MCF 10A (cell line): ENCODE measurements at regions of chr7 and their contacts with region 1.

Region 1: DNA sequence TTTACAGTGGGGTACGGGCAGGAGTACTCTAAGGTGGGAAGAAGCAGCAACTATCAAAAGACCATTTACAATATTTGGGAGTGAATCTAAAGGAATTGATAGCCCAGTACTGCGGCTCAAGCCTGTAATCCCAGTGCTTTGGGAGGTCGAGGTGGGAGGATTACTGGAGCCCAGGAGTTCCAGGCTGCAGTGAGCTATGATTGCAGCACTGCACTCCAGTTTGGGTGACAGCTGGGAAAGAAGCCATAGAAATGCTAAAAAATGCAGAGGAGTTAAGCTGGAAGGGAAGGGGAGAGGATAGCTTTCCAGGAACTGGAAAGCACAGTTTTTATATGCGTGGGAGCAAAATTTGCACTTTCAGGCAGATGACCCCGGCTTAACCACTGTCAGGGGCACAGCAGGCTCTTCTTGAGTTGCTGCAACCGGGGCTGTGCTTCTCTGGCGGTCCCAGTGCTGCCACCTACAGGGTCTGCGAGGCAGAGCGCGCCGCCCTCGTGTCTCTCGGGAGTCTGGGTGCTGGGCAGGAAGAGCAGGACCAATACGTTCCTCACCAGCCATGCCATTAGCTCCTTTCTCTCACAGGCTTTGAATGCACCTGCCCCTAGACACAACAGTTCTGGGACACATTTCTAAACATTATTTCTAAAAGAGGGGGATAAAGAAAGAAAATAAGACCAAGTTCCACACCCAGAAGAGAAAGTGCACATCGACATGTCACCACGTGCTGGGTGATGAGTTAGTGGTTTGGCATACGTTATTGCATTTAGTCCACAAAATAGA is 10.1 kb upstream of the BMPER start:
- DNase-seq: peak; percentile 77
- H3K4me3 Mint-ChIP-seq: no peak overlapping the region
- H3K27ac Mint-ChIP-seq: no peak overlapping the region
- H3K4me1 Mint-ChIP-seq: peaks cover 14% of the 10 kb centered on the region
- H3K27me3 Mint-ChIP-seq: peaks cover 11% of the 10 kb centered on the region
- CTCF ChIP-seq: peak; percentile 79

Region 2: GRCh38 chr7:33716581-33717477 is 178.4 kb before region 1 on chr7:
- CTCF ChIA-PET with region 1: interaction called, 13 read pairs
- POLR2A ChIA-PET with region 1: no interaction called
- intact Hi-C with region 1: no loop called
- DNase-seq: peak; percentile 63
- H3K4me3 Mint-ChIP-seq: no peak overlapping the region
- H3K27ac Mint-ChIP-seq: no peak overlapping the region
- H3K4me1 Mint-ChIP-seq: peaks cover 5% of the 10 kb centered on the region
- H3K27me3 Mint-ChIP-seq: peaks cover 15% of the 10 kb centered on the region
- CTCF ChIP-seq: peak; percentile 81

Region 3: DNA sequence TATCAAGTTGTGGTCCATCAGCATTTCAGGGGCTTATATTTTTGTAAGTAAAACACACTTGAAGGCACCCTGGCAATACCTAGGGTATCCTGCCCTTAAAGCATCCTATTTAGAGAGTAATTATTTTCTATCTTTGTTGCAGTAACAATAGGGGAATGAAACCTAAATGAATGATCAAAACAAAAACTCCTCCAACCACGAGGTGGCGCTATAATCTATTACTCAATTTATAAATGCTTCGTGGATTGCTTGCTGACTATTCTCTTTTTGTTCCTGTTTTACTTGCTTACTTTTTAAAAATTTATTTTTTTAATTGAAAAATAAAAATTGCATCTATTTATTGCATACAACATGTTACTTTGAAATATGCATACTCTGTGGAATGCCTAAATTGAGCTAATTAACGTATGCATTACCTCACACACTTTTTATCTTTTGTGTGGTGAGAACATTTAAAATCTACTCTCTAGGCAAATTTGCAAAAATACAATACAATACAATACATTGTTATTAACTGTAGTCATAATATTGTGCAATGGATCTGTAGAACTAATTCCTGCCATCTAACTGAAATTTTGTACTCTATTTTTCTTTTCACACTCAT is 137.6 kb before region 1 on chr7:
- CTCF ChIA-PET with region 1: interaction called, 90 read pairs
- POLR2A ChIA-PET with region 1: no interaction called
- intact Hi-C with region 1: loop called (anchors 2 kb)
- DNase-seq: peak; percentile 61
- H3K4me3 Mint-ChIP-seq: no peak overlapping the region
- H3K27ac Mint-ChIP-seq: no peak overlapping the region
- H3K4me1 Mint-ChIP-seq: no peaks in the 10 kb centered on the region
- H3K27me3 Mint-ChIP-seq: no peaks in the 10 kb centered on the region
- CTCF ChIP-seq: peak; percentile 55

Region 4: DNA sequence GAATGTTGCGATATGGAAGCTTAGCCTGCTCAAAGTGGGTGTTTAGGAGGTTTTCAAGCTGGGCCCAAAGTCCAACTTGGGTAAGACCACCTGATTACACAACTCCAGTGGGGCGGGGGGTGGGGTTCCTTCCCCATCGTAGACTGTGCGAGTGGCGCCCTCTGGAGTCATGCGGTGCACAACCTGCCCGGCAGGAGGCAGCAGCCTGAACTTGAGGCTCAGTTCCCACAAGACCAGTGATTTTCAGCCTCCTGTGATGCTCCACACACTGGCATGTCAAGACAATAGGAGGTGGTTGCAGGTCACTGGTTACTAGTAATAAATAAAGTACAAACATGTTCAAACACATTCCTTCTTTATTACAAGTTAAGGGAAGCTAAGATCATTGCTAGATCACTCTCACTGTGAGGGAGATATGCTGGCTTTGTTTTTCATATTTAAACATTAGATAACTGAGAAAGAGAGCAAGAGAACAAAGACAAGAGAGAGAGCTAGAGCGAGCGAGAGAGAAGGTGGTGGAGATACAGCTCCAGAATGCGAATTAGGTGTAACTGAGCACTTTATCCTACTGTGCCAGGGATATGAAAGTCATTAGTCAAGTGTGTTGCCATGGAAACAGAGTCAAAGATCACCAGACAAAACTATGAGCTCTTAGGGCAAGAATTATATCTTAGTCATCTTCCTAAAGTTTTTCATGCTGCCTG is 87.3 kb before region 1 on chr7:
- CTCF ChIA-PET with region 1: interaction called, 28 read pairs
- POLR2A ChIA-PET with region 1: interaction called, 5 read pairs
- intact Hi-C with region 1: no loop called
- DNase-seq: peak; percentile 59
- H3K4me3 Mint-ChIP-seq: no peak overlapping the region
- H3K27ac Mint-ChIP-seq: peak overlapping the region; percentile 1
- H3K4me1 Mint-ChIP-seq: peaks cover 16% of the 10 kb centered on the region
- H3K27me3 Mint-ChIP-seq: no peaks in the 10 kb centered on the region
- CTCF ChIP-seq: peak; percentile 39

Region 5: GRCh38 chr7:34622182-34622581 is 727.0 kb after region 1 on chr7:
- CTCF ChIA-PET with region 1: no interaction called
- POLR2A ChIA-PET with region 1: no interaction called
- intact Hi-C with region 1: no loop called
- DNase-seq: no peak
- H3K4me3 Mint-ChIP-seq: no peak overlapping the region
- H3K27ac Mint-ChIP-seq: no peak overlapping the region
- H3K4me1 Mint-ChIP-seq: no peaks in the 10 kb centered on the region
- H3K27me3 Mint-ChIP-seq: no peaks in the 10 kb centered on the region
- CTCF ChIP-seq: no peak